Mucosa of descending colon (tissue), 3 donors: ENCODE measurements at regions of chr12 and their contacts with region 1.

Region 1: GRCh38 chr12:89960011-89960507 is 251.4 kb upstream of the ATP2B1 start:
- DNase-seq: peak in 1 of 3 donors; percentile 27
- ATAC-seq: peak; percentile 58
- H3K4me3 ChIP-seq: no peak overlapping the region
- H3K4me1 ChIP-seq: peaks cover 36% of the 10 kb centered on the region
- CTCF ChIP-seq: no peak

Region 2: GRCh38 chr12:89542912-89543592 is 417.0 kb before region 1 on chr12:
- intact Hi-C with region 1: loop called in 1 of 2 experiments (anchors 10 kb)
- DNase-seq: peak in 2 of 3 donors; percentile 48 to 91
- ATAC-seq: peak; percentile 92
- H3K4me3 ChIP-seq: no peak overlapping the region
- H3K4me1 ChIP-seq: peaks cover 8% of the 10 kb centered on the region
- CTCF ChIP-seq: peak; percentile 76

Region 3: DNA sequence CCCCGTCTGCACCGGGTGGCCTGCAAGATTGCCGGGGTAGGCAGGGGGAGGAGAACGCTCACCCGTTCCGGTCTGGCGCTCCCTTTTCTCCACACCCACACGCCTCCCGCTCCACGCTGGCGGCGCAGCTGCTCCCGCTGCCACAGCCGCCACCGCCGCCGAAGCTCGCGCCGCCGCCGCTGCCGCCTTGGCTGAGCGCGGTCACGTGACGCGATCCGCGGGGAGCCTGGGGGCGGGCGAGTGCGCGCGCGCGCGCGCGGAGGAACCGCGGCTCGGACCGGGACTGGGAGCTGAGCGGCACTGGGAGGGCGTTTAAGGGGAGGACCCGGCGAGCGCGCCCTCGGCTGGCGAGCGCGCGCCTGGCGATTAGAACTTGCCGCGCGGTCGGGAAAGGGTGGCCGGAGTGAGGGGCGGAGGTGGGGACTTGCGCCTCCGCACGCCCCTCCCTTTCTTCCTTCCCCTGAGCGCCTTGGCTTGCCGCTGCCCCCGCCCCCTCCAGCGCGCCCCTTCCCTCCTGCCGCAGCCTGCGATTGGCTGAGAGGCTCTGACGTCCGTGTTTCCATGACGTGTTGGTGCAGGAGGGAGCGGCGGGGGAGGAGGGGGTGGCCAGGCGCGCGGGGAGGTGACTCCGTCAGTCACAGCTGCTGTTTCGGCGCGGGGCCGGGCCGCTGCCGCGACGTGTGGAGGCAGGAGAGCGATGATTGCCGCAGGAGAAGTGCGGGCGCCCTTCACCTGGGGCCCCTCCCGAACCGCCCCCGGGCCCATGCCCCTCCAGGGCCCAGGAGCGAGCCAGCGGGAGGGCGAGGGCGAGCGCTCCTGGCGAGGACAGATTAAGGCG is 250.7 kb before region 1 on chr12:
- intact Hi-C with region 1: loop called in 1 of 2 experiments (anchors 10 kb)
- DNase-seq: peak; percentile 99
- ATAC-seq: peak; percentile 83
- H3K4me3 ChIP-seq: peak overlapping the region; percentile 87
- H3K4me1 ChIP-seq: peaks cover 11% of the 10 kb centered on the region
- CTCF ChIP-seq: no peak

Region 4: DNA sequence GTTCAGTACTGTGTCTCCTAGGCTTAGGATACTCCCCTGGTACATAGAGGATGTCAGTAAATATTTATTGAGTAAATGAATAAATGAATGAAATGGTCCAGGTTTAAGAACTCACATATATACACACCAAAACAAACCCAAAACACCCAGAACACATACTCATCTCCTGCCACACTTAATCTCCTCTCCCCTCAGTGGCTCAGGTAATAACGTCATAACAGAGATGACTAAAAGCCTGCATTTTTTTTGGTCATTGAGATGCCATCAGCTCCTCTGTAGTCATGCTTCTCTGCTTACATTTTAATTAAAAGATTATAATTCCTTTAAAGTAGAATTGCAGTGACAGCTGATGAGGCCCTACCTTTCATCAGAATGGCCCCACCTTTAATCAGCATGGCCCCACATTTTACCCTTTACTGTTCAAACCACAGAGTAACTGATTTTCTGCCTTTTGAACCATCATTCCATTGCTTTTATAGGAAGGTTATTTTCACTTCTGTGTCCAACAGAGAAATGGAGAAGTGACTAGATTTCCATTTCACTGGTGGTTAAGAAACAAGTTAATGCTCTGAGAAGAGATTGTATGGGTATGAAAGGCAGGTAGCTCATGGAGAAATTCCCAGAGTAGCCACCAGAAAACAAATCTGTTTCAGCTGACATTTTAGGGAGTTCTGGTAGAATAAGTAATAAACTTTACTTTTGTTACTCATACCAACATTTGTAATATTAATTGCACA is 58.0 kb before region 1 on chr12:
- intact Hi-C with region 1: no loop called
- DNase-seq: no peak
- ATAC-seq: no peak
- H3K4me3 ChIP-seq: no peak overlapping the region
- H3K4me1 ChIP-seq: no peaks in the 10 kb centered on the region
- CTCF ChIP-seq: no peak